Naive thymus-derived CD4-positive, alpha-beta T cell (primary cell): ENCODE measurements at regions of chr2 and their contacts with region 1.

Region 1: DNA sequence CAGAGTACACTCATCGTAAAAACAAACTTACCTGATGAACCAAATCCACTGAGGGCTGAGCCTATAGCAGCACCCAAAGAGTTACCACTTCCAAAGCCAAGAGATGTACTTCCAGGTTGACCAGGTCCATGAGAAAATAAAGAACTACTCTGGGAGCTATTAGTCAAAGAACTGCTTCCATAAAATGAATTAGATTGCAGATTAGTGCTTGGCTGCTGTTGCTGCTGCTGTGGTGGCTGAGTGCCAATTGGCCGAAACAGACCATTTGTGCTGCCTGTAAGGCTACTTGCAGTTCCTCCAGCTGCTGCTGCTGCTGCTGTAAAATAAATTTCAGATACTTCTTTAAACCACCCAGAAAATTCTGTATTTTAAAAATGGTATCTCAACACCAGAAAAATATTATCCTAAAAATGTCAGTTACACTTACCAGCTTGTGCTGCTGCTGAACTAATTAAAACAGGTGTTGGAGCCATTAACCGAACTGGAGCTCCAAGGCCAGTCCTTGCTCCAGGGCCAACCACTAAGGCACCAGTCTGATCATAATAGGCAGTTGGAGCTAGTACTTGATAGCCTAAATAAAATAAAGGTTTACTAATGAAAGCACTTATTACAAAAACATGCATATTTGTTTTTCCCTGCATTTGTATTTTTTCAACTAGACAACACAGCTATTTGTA is 58.1 kb upstream of the SDC1 start:
- DNase-seq: no peak
- ATAC-seq: no peak
- H3K4me3 ChIP-seq: no peak overlapping the region
- H3K4me3 Mint-ChIP-seq: no peak overlapping the region
- H3K27ac ChIP-seq: no peak overlapping the region
- H3K27ac Mint-ChIP-seq: peak overlapping the region in 2 of 9 donors; percentile 40 to 79
- H3K4me1 ChIP-seq: peaks cover 0 to 3% of the 10 kb centered on the region in 2 donors
- H3K4me1 Mint-ChIP-seq: peaks cover 6 to 30% (median 18%) of the 10 kb centered on the region in 7 donors
- H3K27me3 ChIP-seq: no peaks in the 10 kb centered on the region
- H3K27me3 Mint-ChIP-seq: no peaks in the 10 kb centered on the region

Region 2: GRCh38 chr2:20313659-20314058 is 30.6 kb after region 1 on chr2:
- CTCF ChIA-PET with region 1: no interaction called
- POLR2A ChIA-PET with region 1: no interaction called
- intact Hi-C with region 1: loop called in 1 of 2 experiments (anchors 2 kb)
- DNase-seq: no peak
- ATAC-seq: no peak
- H3K4me3 ChIP-seq: no peak overlapping the region
- H3K4me3 Mint-ChIP-seq: no peak overlapping the region
- H3K27ac ChIP-seq: no peak overlapping the region
- H3K27ac Mint-ChIP-seq: peak overlapping the region in 2 of 9 donors; percentile 10 to 25
- H3K4me1 ChIP-seq: peaks cover 10 to 14% of the 10 kb centered on the region in 2 donors
- H3K4me1 Mint-ChIP-seq: peaks cover 7 to 54% (median 43%) of the 10 kb centered on the region in 7 donors
- H3K27me3 ChIP-seq: no peaks in the 10 kb centered on the region
- H3K27me3 Mint-ChIP-seq: no peaks in the 10 kb centered on the region